ENCODE measurements at regions of chr4 and their contacts with region 1.

Region 1: DNA sequence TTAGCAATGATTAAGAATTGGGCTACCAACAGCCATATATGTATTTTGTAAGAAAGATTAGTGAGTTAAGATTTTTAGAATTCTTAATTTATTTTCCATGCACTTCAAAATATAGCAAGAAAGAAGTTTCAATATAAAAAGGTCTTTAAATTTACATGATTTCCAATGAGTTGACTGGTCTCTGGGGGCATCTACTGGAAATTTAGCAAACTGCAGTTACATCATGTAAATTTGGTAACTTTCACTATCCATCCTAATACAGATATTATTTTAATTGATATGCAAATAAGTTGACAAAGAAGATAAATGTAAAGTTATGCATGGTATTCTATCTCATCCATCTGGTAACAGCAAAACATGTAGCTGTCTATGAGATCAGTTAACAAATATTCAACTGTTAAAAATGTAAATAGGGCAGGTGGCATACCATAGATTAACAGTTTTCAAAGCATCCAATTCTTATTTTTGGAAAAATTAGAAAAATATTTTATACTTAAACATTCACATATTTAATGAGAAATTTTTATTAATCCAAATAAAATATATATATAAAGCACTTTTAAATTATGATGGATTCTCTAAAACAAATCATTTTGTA is 29.1 kb downstream of the TTC29 start:
- DNase-seq: no peak
- H3K4me3 ChIP-seq: no peak overlapping the region
- H3K27ac ChIP-seq: no peak overlapping the region
- H3K4me1 ChIP-seq: no peaks in the 10 kb centered on the region
- H3K27me3 ChIP-seq: no peaks in the 10 kb centered on the region
- CTCF ChIP-seq: peak in 2 of 4 experiments; percentile 36 to 37
- EP300 ChIP-seq: no peak
- POLR2A ChIP-seq: no peak

Region 2: GRCh38 chr4:146342600-146343192 is 573.9 kb before region 1 on chr4:
- intact Hi-C with region 1: loop called (anchors 10 kb)
- DNase-seq: no peak
- H3K4me3 ChIP-seq: no peak overlapping the region
- H3K27ac ChIP-seq: no peak overlapping the region
- H3K4me1 ChIP-seq: no peaks in the 10 kb centered on the region
- H3K27me3 ChIP-seq: no peaks in the 10 kb centered on the region
- CTCF ChIP-seq: peak in 3 of 4 experiments; percentile 15 to 50 (median 19)
- EP300 ChIP-seq: no peak
- POLR2A ChIP-seq: no peak

Region 3: DNA sequence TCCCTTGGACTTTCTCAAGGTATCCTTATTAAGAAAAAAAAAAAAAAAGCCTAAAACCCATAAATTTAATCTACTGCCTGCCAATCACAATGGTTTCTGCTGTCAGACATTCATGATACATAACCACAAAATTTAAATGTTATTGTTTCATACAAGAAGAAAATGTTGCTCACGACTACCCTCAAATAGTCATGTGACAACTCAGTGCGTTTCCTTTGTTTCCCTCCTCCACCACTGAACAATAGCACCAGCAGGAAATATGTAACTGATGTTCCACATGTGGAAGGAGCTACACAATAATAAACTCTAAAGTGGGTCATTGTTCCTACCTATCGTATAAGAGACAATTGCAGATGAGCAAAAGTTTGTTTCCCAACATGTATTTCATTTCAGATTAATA is 320.2 kb after region 1 on chr4:
- intact Hi-C with region 1: no loop called
- DNase-seq: no peak
- H3K4me3 ChIP-seq: no peak overlapping the region
- H3K27ac ChIP-seq: no peak overlapping the region
- H3K4me1 ChIP-seq: no peaks in the 10 kb centered on the region
- H3K27me3 ChIP-seq: no peaks in the 10 kb centered on the region
- CTCF ChIP-seq: no peak
- EP300 ChIP-seq: no peak
- POLR2A ChIP-seq: no peak